Activated CD4-positive, alpha-beta T cell treated with anti-CD3 and anti-CD28 coated beads, Interleukin-2, amount 10 ng/mL, durations not matched to agents 7 days and 5 days (primary cell): ENCODE measurements at regions of chr3 and their contacts with region 1.

Region 1: GRCh38 chr3:47836986-47837385 is 34.0 kb downstream of the DHX30 start:
- DNase-seq: no peak
- H3K4me3 Mint-ChIP-seq: no peak overlapping the region
- H3K27ac Mint-ChIP-seq: no peak overlapping the region
- H3K4me1 Mint-ChIP-seq: no peaks in the 10 kb centered on the region
- H3K27me3 Mint-ChIP-seq: no peaks in the 10 kb centered on the region

Region 2: DNA sequence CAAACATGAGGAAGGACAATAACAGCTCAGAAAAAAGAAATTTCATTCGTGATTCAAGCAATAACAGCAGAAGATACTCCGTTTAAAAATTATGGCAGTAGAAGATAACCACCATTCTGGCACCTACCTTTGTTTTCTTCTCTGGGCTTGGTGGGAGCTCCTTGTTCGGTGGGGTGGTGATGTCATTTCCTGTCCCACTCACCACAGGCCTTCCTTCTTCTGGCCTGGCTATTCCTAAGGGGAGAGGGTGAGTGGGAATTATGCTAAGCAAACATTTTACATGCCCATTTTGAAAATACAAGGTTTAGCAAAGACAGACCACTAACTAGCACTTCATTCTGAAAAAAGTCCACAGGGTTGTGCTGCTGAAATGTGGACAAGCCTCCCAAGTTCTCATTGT is 40.3 kb after region 1 on chr3:
- CTCF ChIA-PET with region 1: no interaction called
- POLR2A ChIA-PET with region 1: no interaction called
- DNase-seq: no peak
- H3K4me3 Mint-ChIP-seq: no peak overlapping the region
- H3K27ac Mint-ChIP-seq: no peak overlapping the region
- H3K4me1 Mint-ChIP-seq: peaks cover 10% of the 10 kb centered on the region
- H3K27me3 Mint-ChIP-seq: no peaks in the 10 kb centered on the region

Region 3: DNA sequence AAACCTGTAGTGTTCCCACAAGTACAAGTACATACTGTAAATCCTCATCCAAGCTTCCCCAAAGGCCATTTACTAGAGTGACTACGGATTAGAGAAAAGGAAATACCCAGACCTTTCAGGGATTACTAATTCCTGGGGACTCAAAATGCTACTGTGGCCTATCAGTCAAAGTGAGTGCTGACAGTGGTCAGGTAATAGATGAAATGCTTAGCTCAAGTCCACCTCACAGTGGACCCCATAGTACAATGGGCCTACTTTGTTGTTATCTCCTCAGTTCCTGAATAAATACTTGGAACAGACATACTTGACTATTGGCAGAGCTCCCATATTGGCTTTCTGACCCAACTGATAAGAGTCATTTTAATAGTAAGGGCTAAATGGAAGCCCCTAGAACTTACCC is 117.6 kb after region 1 on chr3:
- CTCF ChIA-PET with region 1: no interaction called
- POLR2A ChIA-PET with region 1: no interaction called
- DNase-seq: no peak
- H3K4me3 Mint-ChIP-seq: no peak overlapping the region
- H3K27ac Mint-ChIP-seq: no peak overlapping the region
- H3K4me1 Mint-ChIP-seq: no peaks in the 10 kb centered on the region
- H3K27me3 Mint-ChIP-seq: no peaks in the 10 kb centered on the region

Region 4: GRCh38 chr3:48151058-48151806 is 314.2 kb after region 1 on chr3:
- CTCF ChIA-PET with region 1: interaction called, 18 read pairs
- POLR2A ChIA-PET with region 1: no interaction called
- DNase-seq: peak; percentile 73
- H3K4me3 Mint-ChIP-seq: no peak overlapping the region
- H3K27ac Mint-ChIP-seq: peak overlapping the region; percentile 43
- H3K4me1 Mint-ChIP-seq: peaks cover 2% of the 10 kb centered on the region
- H3K27me3 Mint-ChIP-seq: no peaks in the 10 kb centered on the region